H1 (cell line): ENCODE measurements at regions of chr13 and their contacts with region 1.

Region 1: GRCh38 chr13:38730332-38730731 is 43.5 kb downstream of the FREM2 start:
- DNase-seq: no peak
- H3K4me3 ChIP-seq: no peak overlapping the region
- H3K27ac ChIP-seq: no peak overlapping the region
- H3K4me1 ChIP-seq: no peaks in the 10 kb centered on the region
- H3K27me3 ChIP-seq: no peaks in the 10 kb centered on the region
- CTCF ChIP-seq: no peak
- EP300 ChIP-seq: no peak
- POLR2A ChIP-seq: no peak
- RAD21 ChIP-seq: no peak

Region 2: GRCh38 chr13:38713046-38713445 is 17.3 kb before region 1 on chr13:
- CTCF ChIA-PET with region 1: interaction called, 10 read pairs
- POLR2A ChIA-PET with region 1: interaction called, 5 read pairs
- DNase-seq: no peak
- H3K4me3 ChIP-seq: no peak overlapping the region
- H3K27ac ChIP-seq: no peak overlapping the region
- H3K4me1 ChIP-seq: peaks cover 0 to 2% (median 0%) of the 10 kb centered on the region in 4 experiments; a peak in 1 of 7 replicates
- H3K27me3 ChIP-seq: no peaks in the 10 kb centered on the region
- CTCF ChIP-seq: no peak
- EP300 ChIP-seq: no peak
- POLR2A ChIP-seq: no peak
- RAD21 ChIP-seq: no peak

Region 3: GRCh38 chr13:38755793-38756192 is 25.5 kb after region 1 on chr13:
- CTCF ChIA-PET with region 1: no interaction called
- POLR2A ChIA-PET with region 1: no interaction called
- DNase-seq: no peak
- H3K4me3 ChIP-seq: no peak overlapping the region
- H3K27ac ChIP-seq: no peak overlapping the region
- H3K4me1 ChIP-seq: peaks cover 0 to 13% (median 6%) of the 10 kb centered on the region in 4 experiments; a peak in 3 of 7 replicates
- H3K27me3 ChIP-seq: no peaks in the 10 kb centered on the region
- CTCF ChIP-seq: no peak
- EP300 ChIP-seq: no peak
- POLR2A ChIP-seq: no peak
- RAD21 ChIP-seq: no peak